ENCODE measurements at regions of chr14 and their contacts with region 1.

Region 1: DNA sequence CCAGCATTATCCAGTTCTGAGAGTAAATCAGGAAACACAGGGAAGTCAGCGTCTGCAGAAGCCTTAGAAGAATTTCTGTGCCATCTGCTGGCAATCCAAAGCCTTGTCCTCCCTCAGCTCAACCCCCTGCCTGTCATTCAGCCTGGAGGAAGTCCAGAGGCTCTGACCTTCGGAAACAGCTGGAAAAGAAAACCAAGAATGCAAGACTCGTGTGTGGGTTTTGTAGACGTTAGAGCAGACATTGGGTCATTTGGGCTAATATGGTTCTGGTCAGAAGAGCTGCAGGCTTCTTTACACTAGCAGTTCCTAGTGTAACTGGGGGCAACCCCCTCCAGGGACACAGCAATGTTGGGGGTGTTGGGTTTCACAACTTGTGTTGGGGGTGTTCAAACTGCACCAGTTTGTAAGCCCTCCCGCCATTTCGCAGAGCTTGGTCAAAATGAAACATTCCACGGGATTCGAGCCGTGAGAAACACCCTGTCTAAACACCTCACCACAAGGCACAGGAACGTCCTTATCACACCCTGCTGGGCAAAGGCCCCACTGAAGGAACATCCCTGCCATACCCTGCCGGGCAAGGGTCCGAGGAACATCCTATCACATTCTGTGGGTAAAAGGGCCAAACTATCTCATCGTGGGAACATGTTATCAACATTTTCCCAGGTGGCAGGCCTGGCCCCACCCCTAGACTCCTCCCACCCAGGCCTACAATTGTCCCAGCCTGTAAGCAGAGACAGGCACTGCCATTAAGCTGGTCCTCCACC is 21.0 kb upstream of the SERPINA4 start:
- DNase-seq: peak; percentile 43
- H3K4me3 ChIP-seq: no peak overlapping the region
- H3K27ac ChIP-seq: no peak overlapping the region
- H3K4me1 ChIP-seq: peaks cover 23% of the 10 kb centered on the region
- H3K27me3 ChIP-seq: no peaks in the 10 kb centered on the region
- CTCF ChIP-seq: no peak
- POLR2A ChIP-seq: no peak

Region 2: DNA sequence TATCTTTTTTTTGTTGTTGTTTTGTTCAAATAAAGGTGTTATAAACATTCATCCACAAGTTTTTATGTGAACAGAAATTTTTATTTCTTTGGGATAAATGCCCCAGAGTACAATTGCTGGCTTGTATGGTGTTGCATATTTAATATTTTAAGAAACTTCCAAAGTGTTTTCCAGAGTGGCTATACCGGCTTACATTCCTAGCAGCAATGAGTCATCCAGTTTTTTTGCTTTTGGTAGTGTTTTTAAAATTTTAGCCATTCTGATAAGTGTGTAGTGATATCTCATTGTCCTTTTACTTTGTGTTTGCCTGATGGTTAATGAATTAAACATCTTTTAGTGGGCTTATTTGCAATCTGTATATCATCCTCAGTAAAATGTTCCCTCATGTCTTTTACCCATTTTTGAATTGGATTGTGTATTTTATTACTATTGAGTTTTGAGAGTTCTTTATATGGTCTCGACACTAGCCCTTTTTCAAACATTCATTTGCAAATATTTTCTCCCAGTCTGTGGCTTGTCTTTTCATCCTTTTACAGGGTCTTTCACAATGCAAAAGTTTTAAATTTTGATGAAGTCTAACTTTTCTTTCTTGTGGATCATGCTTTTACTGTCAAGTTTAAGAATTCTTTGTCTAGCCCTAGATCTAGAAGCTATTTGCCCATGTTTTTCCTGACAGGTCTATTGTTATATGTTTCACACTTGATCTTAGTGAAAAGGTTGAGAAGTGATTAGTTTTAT is 336.6 kb before region 1 on chr14:
- CTCF ChIA-PET with region 1: no interaction called
- POLR2A ChIA-PET with region 1: no interaction called
- dilution Hi-C with region 1: no loop called
- intact Hi-C with region 1: no loop called
- DNase-seq: no peak
- H3K4me3 ChIP-seq: no peak overlapping the region
- H3K27ac ChIP-seq: no peak overlapping the region
- H3K4me1 ChIP-seq: no peaks in the 10 kb centered on the region
- H3K27me3 ChIP-seq: peaks cover 0 to 2% of the 10 kb centered on the region in 2 experiments
- CTCF ChIP-seq: no peak
- POLR2A ChIP-seq: no peak

Region 3: GRCh38 chr14:94412671-94413638 is 127.3 kb before region 1 on chr14:
- CTCF ChIA-PET with region 1: no interaction called
- POLR2A ChIA-PET with region 1: no interaction called
- dilution Hi-C with region 1: no loop called
- intact Hi-C with region 1: no loop called
- DNase-seq: no peak
- H3K4me3 ChIP-seq: no peak overlapping the region
- H3K27ac ChIP-seq: no peak overlapping the region
- H3K4me1 ChIP-seq: no peaks in the 10 kb centered on the region
- H3K27me3 ChIP-seq: no peaks in the 10 kb centered on the region
- CTCF ChIP-seq: no peak
- POLR2A ChIP-seq: no peak

Region 4: DNA sequence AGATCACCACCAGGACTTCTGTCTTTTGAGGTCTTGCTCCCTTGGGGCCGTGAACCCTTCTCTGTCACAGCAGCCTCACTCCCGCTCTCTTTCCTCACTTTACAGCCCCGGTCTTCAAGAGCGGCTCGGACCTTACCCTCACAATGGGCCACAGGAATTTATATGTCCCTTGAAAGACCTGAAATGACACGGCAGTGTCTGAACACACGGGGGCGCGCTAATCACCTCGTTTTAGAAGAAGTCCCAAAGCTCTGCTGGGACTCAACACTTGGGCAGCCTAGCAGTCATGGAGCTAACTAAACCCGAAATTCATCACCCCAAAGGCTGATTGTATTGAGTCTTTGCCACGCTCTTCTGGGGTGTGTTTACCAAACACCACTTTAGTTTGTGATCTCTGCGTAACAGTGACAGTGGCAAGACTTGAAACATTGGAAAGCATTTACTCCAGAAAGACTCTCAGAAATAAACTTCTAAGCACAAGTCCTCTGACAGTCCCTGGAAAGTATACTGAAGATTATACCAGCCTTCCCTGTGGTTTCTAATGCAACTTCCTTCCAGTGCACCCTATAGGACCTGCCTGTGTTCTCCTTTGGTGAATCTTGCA is 116.7 kb before region 1 on chr14:
- CTCF ChIA-PET with region 1: interaction called, 6 read pairs
- POLR2A ChIA-PET with region 1: no interaction called
- dilution Hi-C with region 1: no loop called
- intact Hi-C with region 1: loop called (anchors 2 kb)
- DNase-seq: peak; percentile 41
- H3K4me3 ChIP-seq: no peak overlapping the region
- H3K27ac ChIP-seq: no peak overlapping the region
- H3K4me1 ChIP-seq: no peaks in the 10 kb centered on the region
- H3K27me3 ChIP-seq: no peaks in the 10 kb centered on the region
- CTCF ChIP-seq: peak; percentile 64 to 67
- POLR2A ChIP-seq: no peak

Region 5: DNA sequence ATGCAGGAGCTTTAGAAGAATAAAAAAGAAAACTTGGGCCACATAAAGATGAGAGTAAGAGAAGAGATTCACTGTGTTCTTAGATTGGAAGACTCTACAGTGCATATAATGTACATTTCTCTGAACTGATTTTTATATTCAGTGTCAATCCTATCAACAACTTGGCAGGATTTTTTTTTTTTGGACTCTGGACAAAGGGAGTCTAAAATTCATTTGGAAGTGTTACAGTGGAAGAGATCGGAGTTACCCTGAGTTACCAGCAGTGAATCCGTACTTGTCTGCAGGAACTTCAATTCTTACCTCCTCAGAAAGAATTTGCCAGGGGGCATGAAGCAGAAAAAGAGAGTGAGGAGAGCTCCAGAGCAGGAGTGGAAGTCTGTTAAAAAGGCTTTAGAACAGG is 111.6 kb before region 1 on chr14:
- CTCF ChIA-PET with region 1: interaction called, 32 read pairs
- POLR2A ChIA-PET with region 1: no interaction called
- dilution Hi-C with region 1: no loop called
- intact Hi-C with region 1: loop called (anchors 2 kb)
- DNase-seq: no peak
- H3K4me3 ChIP-seq: no peak overlapping the region
- H3K27ac ChIP-seq: no peak overlapping the region
- H3K4me1 ChIP-seq: no peaks in the 10 kb centered on the region
- H3K27me3 ChIP-seq: no peaks in the 10 kb centered on the region
- CTCF ChIP-seq: no peak
- POLR2A ChIP-seq: no peak

Region 6: DNA sequence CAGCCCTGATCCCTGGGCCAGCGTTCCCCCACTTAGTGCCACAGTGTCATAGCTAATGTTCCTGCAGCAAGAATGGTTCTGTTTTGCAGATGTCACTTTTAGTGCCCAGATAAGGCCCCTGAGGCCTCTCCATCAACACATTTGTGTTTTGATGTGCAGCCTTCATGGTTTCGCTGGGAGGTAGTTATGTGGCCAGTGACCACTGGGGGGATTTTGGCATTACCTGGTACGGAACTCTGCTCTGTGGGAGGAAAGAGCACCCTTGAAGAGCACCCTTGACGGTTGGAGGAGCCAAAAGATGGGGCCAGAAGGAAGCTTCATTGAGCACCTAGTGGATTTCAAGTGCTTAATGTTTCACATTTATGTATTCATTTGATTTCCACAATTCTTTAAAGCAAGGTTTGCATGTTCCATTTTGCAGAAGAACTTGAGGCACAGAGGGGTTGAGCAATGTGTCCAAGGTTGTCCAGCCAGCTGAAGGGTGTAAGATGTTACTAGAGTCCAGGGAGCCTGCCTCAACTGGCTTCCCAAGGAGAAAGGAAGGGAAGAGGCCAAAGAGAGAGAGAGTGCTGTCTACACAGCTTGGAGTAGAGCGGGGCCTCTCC is 100.7 kb before region 1 on chr14:
- CTCF ChIA-PET with region 1: interaction called, 3 read pairs
- POLR2A ChIA-PET with region 1: no interaction called
- dilution Hi-C with region 1: no loop called
- intact Hi-C with region 1: loop called (anchors 2 kb)
- DNase-seq: no peak
- H3K4me3 ChIP-seq: no peak overlapping the region
- H3K27ac ChIP-seq: no peak overlapping the region
- H3K4me1 ChIP-seq: no peaks in the 10 kb centered on the region
- H3K27me3 ChIP-seq: no peaks in the 10 kb centered on the region
- CTCF ChIP-seq: no peak
- POLR2A ChIP-seq: no peak

Region 7: GRCh38 chr14:94601884-94602391 is 61.7 kb after region 1 on chr14:
- CTCF ChIA-PET with region 1: no interaction called
- POLR2A ChIA-PET with region 1: no interaction called
- dilution Hi-C with region 1: no loop called
- intact Hi-C with region 1: loop called (anchors 2 kb)
- DNase-seq: peak; percentile 51
- H3K4me3 ChIP-seq: no peak overlapping the region
- H3K27ac ChIP-seq: peak overlapping the region; percentile 19
- H3K4me1 ChIP-seq: peaks cover 36% of the 10 kb centered on the region
- H3K27me3 ChIP-seq: no peaks in the 10 kb centered on the region
- CTCF ChIP-seq: no peak
- POLR2A ChIP-seq: no peak

Region 8: GRCh38 chr14:94681300-94682060 is 141.3 kb after region 1 on chr14:
- CTCF ChIA-PET with region 1: no interaction called
- POLR2A ChIA-PET with region 1: no interaction called
- dilution Hi-C with region 1: no loop called
- intact Hi-C with region 1: loop called (anchors 5 kb)
- DNase-seq: peak; percentile 14
- H3K4me3 ChIP-seq: no peak overlapping the region
- H3K27ac ChIP-seq: no peak overlapping the region
- H3K4me1 ChIP-seq: no peaks in the 10 kb centered on the region
- H3K27me3 ChIP-seq: no peaks in the 10 kb centered on the region
- CTCF ChIP-seq: peak; percentile 31 to 44
- POLR2A ChIP-seq: no peak